Posterior vena cava (tissue), 2 donors: ENCODE measurements at regions of chr9 and their contacts with region 1.

Region 1: GRCh38 chr9:134434894-134435506 is 108.7 kb downstream of the RXRA start:
- DNase-seq: peak; percentile 98

Region 2: DNA sequence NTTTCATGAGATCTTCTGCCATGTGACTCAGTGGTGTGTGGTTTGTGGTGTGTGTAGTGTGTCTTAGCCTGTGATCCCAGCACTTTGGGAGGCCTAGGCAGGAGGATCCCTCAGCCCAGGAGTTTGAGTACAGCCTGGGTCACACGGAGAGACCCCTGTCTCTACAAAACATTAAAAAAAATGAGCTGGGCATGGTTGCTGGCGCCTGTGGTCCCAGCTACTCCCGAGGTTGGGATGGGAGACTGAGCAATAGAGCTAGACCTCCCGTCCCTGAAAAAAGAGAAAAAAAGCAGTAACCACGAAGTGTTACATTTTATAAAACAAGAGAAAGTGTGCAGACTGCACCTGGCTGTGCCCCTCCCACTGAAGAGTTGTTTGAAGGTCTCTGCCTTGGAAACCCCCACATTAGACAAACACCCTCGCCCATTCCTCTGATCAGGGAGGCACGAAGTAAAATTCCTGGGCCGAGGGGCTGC is 249.4 kb before region 1 on chr9:
- intact Hi-C with region 1: loop called in 1 of 2 experiments (anchors 5 kb)
- DNase-seq: peak; percentile 25

Region 3: GRCh38 chr9:134339183-134339806 is 95.7 kb before region 1 on chr9:
- intact Hi-C with region 1: loop called in 1 of 2 experiments (anchors 10 kb)
- DNase-seq: no peak

Region 4: DNA sequence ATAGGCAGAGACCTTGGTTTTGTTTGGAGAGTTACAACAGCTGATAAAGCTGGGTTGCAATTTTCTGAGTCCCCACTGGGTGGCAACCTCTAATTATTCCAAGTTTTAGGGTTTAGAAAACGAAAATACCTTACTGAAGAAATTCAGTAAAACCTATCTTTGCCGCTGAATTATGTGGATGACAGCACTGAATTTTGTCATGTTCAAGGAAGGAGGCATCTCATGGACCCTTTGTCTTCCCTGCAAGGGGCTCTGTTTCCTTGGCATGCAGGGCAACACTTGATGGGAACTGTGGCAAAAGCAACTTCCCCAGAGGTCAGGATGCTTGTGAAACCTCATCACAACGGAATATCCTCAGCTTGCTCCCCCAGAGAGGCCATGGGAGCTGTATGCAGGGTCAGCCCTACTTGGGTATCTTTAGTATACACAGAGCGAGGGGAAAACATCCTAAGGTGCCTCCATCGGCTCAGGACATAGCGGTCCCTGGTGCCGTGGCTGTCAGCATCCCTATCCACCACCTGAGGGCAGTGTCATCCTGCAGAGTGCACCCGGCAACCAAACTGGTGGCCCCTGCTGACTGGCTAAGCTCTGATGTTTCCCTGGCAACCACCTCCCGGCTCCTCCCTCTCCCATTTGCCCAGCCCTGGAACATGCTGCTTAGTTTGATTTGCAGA is 14.4 kb after region 1 on chr9:
- intact Hi-C with region 1: no loop called
- DNase-seq: peak; percentile 96